ENCODE measurements at regions of chr11 and their contacts with region 1.

Region 1: DNA sequence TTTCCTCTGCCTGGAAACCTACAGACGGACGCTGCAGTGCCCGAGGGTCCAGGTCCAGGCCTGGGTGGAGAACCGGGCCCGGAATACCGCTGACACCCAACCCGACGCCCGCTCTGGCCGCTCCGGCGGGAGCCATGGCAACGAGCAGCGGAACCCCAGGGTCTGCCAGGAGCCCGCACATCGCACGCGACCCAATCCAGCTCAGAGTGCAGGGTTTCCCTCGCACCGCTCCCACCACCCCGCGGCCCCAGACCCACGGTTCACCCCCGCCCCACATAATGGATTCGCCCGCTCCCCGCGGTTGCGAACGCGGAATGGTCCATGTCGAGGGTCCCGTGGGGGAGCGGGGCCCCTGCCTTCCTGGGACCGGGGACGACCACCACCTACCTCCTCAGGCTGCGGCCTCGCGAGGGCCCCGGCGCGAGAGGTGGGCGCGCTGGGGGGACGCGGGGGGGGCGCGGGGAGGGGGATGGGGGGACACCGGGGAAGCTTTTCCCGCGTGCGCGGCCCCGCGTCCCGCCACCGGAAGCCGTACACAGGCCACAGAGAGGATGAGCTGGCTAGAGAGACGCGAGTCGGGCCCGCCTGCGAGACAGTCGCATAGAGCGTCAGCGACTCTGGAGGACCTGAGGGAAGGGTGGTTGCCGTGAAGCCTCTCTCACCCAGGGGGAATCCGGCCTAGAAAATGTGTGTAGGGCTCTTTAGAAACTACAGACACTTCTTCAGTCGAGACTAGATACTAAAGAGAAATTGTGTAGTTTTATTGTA is at the start of gene SSRP1:
- DNase-seq: peak; percentile 47
- ATAC-seq: peak; percentile 98
- H3K4me3 ChIP-seq: peak within 1 kb of the TSS; percentile 87
- H3K27ac ChIP-seq: peak within 1 kb of the TSS; percentile 81
- H3K4me1 ChIP-seq: peaks cover 10% of the 10 kb centered on the region
- H3K27me3 ChIP-seq: no peaks in the 10 kb centered on the region; a peak in 1 of 4 replicates
- CTCF ChIP-seq: peak in 2 of 3 experiments; percentile 3 to 30; a peak in 1 of 6 replicates
- EP300 ChIP-seq: no peak; a peak in 1 of 4 replicates
- POLR2A ChIP-seq: peak; percentile 79
- RAD21 ChIP-seq: no peak
- polyA plus RNA-seq, gene SSRP1: 74.3 to 119 TPM

Region 2: DNA sequence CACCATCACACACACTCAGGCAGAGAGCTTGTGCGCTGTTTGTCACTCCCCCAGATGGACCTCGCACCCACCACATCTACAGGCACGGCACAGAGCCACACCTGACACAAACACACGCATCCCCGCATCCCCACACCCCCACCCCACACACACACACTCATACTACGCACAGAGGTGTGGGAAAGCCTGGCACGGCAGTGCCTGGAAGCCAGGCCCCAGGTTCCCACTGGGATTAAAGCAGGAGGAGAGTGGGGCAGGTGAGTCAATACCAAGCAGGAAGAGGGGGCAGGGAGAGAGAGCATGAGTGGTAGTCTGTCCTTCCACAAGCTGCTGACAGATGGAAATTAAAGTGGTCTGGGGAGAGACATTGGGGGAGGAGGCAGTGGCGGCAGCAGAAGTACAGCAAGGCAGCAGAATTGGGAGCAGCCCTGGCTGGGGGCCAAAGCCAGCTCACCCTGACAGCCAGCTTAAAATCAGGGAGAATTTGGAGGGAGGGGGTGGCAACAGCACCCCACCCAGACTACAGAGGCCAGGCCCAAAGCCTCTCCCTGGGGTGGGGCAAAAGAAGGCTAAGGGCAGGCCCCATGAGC is 31.4 kb before region 1 on chr11:
- CTCF ChIA-PET with region 1: no interaction called
- POLR2A ChIA-PET with region 1: no interaction called
- RAD21 ChIA-PET with region 1: no interaction called
- SMC1A ChIA-PET with region 1: no interaction called
- in situ Hi-C with region 1: no loop called
- intact Hi-C with region 1: no loop called
- DNase-seq: no peak
- ATAC-seq: no peak
- H3K4me3 ChIP-seq: no peak overlapping the region
- H3K27ac ChIP-seq: no peak overlapping the region
- H3K4me1 ChIP-seq: 0 out of 2 replicates have a peak, but pooled peaks cover 3% of the 10 kb centered on the region
- H3K27me3 ChIP-seq: no peaks in the 10 kb centered on the region
- CTCF ChIP-seq: no peak
- EP300 ChIP-seq: no peak
- POLR2A ChIP-seq: no peak
- RAD21 ChIP-seq: no peak

Region 3: DNA sequence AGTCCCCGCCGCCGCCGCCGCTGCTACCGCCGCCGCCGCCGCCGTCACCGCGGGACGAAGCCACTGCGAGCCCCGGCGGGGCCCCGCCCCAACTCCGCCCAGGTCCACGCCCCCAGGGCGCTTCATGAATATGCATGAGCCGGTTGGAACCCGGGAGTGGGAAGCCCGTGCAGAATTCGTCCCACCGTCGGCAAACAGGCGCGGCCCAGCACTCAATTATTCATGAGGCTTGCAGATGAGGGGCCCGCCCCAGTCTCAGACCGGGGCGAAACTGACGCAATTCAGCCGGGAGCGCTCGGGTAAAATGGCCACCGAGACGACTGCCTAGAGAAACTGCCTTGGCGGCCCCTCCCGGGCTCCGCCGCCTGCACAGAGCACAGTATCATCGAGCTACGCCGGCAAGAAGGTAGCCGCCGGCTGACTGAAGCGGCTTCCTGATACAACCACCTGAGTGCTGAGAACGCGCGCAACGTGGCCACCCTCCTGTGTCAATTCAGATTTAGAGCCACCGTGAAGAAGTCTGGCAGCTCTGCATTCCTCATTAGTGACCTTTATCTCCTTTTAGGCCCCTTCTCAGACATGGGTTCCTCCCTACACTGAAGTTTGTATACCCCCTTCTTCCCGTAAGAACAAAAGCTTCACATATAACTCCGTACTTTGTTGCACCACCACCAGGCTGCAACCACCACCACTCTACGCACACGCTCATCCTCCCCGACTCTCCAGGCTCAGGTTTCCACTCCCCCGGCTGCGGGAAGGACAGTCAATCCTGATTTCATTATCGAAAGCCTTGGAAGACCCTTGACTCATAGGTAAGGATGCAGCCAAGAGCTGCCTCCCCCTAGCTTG is 10.4 kb before region 1 on chr11 and contains the start of gene TNKS1BP1:
- CTCF ChIA-PET with region 1: interaction called, 13 read pairs
- POLR2A ChIA-PET with region 1: interaction called, 35 read pairs
- RAD21 ChIA-PET with region 1: interaction called, 14 read pairs
- SMC1A ChIA-PET with region 1: interaction called, 20 read pairs
- in situ Hi-C with region 1: no loop called
- intact Hi-C with region 1: no loop called
- DNase-seq: peak; percentile 56
- ATAC-seq: peak; percentile 87
- H3K4me3 ChIP-seq: peak within 1 kb of the TSS; percentile 51
- H3K27ac ChIP-seq: peak within 1 kb of the TSS; percentile 81
- H3K4me1 ChIP-seq: peaks cover 22% of the 10 kb centered on the region
- H3K27me3 ChIP-seq: no peaks in the 10 kb centered on the region
- CTCF ChIP-seq: no peak
- EP300 ChIP-seq: no peak
- POLR2A ChIP-seq: peak; percentile 90
- RAD21 ChIP-seq: no peak
- polyA plus RNA-seq, gene TNKS1BP1: 0.26 to 0.47 TPM

Region 4: DNA sequence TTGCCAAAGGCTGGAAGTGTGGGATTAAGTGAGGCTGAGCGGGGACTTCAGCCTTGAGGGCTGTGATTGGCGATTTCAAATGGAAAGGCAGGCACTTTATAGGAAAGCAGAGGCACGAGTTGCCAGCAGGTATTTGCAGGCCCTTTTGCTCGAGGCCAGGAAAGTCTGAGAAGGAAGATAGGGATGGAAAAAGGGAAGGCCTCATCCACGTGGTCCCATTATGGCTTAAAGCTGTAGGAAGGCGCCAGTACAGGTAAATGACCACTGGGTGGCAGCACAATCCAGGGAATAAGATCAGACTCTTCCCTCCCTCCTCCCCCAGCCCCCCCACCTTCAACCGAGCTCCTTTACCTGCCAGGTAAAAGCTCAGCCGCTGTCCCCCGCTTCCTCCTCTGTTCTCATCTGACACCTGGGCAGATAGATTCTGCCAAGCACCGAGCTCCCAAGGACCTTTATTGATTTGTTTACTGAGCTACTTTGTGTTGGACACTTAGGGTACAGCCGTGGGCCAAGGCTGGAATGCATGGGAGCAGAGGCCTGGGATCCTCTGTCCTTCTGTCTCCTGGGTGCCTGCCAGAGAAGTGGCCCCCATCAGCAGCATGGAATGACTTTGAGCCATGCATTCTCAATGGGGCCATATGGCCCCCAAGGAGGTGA is 10.2 kb after region 1 on chr11:
- CTCF ChIA-PET with region 1: interaction called, 15 read pairs
- POLR2A ChIA-PET with region 1: no interaction called
- RAD21 ChIA-PET with region 1: interaction called, 3 read pairs
- SMC1A ChIA-PET with region 1: interaction called, 5 read pairs
- in situ Hi-C with region 1: no loop called
- intact Hi-C with region 1: no loop called
- DNase-seq: no peak
- ATAC-seq: peak; percentile 83
- H3K4me3 ChIP-seq: no peak overlapping the region
- H3K27ac ChIP-seq: no peak overlapping the region
- H3K4me1 ChIP-seq: no peaks in the 10 kb centered on the region; the same call in 1 of the 2 replicates
- H3K27me3 ChIP-seq: peaks cover 0 to 4% of the 10 kb centered on the region in 2 experiments; a peak in 1 of 4 replicates
- CTCF ChIP-seq: peak; percentile 66 to 77 (median 75); a peak in 5 of 6 replicates
- EP300 ChIP-seq: no peak
- POLR2A ChIP-seq: no peak
- RAD21 ChIP-seq: peak; percentile 76

Region 5: GRCh38 chr11:57358543-57358961 is 23.0 kb after region 1 on chr11:
- CTCF ChIA-PET with region 1: no interaction called
- POLR2A ChIA-PET with region 1: no interaction called
- RAD21 ChIA-PET with region 1: no interaction called
- SMC1A ChIA-PET with region 1: no interaction called
- in situ Hi-C with region 1: no loop called
- intact Hi-C with region 1: no loop called
- DNase-seq: no peak
- ATAC-seq: no peak
- H3K4me3 ChIP-seq: no peak overlapping the region
- H3K27ac ChIP-seq: no peak overlapping the region
- H3K4me1 ChIP-seq: no peaks in the 10 kb centered on the region
- H3K27me3 ChIP-seq: peaks cover 0 to 3% of the 10 kb centered on the region in 2 experiments; a peak in 2 of 4 replicates
- CTCF ChIP-seq: no peak
- EP300 ChIP-seq: no peak
- POLR2A ChIP-seq: no peak
- RAD21 ChIP-seq: no peak